GM10248 (cell line): ENCODE measurements at regions of chr5 and their contacts with region 1.

Region 1: GRCh38 chr5:96648023-96648422 is 14.2 kb upstream of the CAST start:
- DNase-seq: no peak
- CTCF ChIP-seq: no peak

Region 2: GRCh38 chr5:96662725-96663513 is 14.9 kb after region 1 on chr5:
- CTCF ChIA-PET with region 1: interaction called, 17 read pairs
- POLR2A ChIA-PET with region 1: no interaction called
- DNase-seq: peak; percentile 93
- CTCF ChIP-seq: no peak

Region 3: DNA sequence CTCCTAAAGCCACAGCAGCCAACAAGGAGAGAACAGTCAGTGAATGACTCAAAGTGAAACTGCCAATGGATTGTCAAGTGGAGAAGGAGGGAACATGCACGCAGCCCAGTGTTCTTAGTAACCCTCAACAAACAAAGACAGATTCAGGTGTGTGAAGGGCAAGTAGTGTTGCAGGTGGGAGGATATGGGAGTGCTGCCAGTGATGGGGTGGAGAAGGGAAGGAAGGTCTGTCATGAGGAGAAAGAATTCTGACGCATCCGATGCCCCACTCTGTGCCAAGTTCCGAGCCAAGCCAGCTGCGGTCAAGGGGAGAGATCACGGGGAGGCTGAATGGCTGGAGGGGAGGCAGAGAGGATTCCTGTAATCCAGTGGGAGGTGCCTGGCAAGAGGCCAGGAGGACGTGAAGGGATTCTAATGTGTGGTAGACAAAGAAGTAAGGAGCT is 70.6 kb after region 1 on chr5:
- CTCF ChIA-PET with region 1: no interaction called
- POLR2A ChIA-PET with region 1: no interaction called
- DNase-seq: no peak
- CTCF ChIP-seq: no peak